BJ (cell line): ENCODE measurements at regions of chr4 and their contacts with region 1.

Region 1: DNA sequence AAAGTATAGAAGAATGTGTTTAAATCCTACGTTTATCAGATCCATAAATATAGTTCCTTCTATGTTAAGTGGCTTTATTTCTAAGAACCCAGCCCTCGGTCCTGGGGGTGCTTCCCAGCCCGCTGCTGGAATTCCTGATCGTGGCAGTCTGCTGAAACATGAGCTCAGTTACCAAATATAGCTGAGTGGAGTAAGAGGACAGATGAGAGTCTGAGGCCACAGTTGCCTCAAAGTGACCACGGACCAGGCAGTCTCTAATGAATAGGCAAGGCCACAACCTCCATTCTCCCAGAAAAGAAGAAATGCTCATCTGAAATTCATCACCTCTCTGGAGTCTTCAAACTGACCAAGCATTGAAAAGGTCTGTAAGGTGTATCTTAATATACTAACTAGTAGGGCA is at the start of gene PALLD:
- DNase-seq: peak; percentile 12
- H3K4me3 ChIP-seq: no peak within 1 kb of the TSS
- H3K27me3 ChIP-seq: no peaks in the 10 kb centered on the region
- CTCF ChIP-seq: no peak
- polyA plus RNA-seq, gene PALLD: 24.9 and 30.3 TPM in 2 replicates

Region 2: GRCh38 chr4:168514249-168514852 is 17.5 kb after region 1 on chr4:
- CTCF ChIA-PET with region 1: interaction called, 17 read pairs
- POLR2A ChIA-PET with region 1: no interaction called
- DNase-seq: no peak
- H3K4me3 ChIP-seq: no peak overlapping the region
- H3K27me3 ChIP-seq: no peaks in the 10 kb centered on the region
- CTCF ChIP-seq: peak; percentile 26; the same call in 1 of the 2 replicates